Activated T-helper 2 cell treated with anti-CD3 and anti-CD28 coated beads, Interferon-gamma antibody, Interleukin-2, Interleukin-4, amounts not matched to agents 10 μg/mL and 5 μg/mL and 100 μg/mL, durations not matched to agents 14 hours and 24 hours and 36 hours (primary cell): ENCODE measurements at regions of chr5 and their contacts with region 1.

Region 1: DNA sequence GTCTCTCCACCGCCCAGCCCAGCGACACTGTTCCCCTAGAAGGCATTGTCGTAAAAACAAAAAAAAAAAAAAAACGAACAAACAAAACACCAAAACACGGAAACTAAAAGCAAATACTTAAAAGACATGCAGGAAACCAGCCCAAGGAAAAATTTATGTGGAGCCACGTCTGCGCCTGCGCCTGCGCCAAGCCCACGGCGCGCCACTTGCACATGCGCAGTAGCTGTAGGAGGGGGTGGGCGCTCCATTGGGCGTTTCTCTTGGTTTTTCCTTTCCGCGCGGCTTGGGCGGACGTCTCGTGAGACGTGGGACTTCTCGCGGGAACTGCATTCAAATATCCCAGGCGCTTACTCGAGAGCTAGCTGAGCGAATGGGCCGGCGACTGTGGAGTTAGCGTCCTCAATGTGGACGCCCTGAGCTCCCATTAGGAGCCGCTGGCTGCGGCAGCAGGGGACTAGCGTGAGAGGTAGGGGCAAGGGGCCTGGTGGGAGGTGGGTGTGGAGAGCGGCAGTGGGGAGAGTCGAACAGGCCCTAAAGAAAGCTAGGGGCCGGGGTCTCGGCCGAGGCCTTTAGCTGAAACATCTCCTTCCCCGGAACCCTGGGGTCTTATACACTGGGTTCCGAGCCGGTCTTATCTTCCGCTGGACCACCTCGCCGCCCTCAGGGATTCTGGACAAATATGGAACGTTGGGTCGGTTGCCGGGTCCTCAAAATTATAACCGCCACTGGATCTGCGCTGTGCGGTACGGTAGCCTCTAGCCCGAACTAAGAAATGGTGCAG is at the start of gene SPDL1:
- DNase-seq: peak; percentile 93
- H3K4me3 Mint-ChIP-seq: peak within 1 kb of the TSS; percentile 98
- H3K27ac Mint-ChIP-seq: peak within 1 kb of the TSS; percentile 94
- H3K4me1 Mint-ChIP-seq: peaks cover 42% of the 10 kb centered on the region
- H3K27me3 Mint-ChIP-seq: peaks cover 12% of the 10 kb centered on the region
- total RNA-seq, gene SPDL1: 35.1 and 35.2 TPM in 2 replicates

Region 2: GRCh38 chr5:168679515-168679920 is 904.1 kb before region 1 on chr5:
- intact Hi-C with region 1: loop called (anchors 1 kb)
- DNase-seq: peak; percentile 42
- H3K4me3 Mint-ChIP-seq: no peak overlapping the region
- H3K27ac Mint-ChIP-seq: no peak overlapping the region
- H3K4me1 Mint-ChIP-seq: peaks cover 21% of the 10 kb centered on the region
- H3K27me3 Mint-ChIP-seq: no peaks in the 10 kb centered on the region

Region 3: GRCh38 chr5:168793841-168794837 is 789.5 kb before region 1 on chr5:
- intact Hi-C with region 1: loop called (anchors 5 kb)
- DNase-seq: no peak
- H3K4me3 Mint-ChIP-seq: no peak overlapping the region
- H3K27ac Mint-ChIP-seq: peak overlapping the region; percentile 95
- H3K4me1 Mint-ChIP-seq: peaks cover 56% of the 10 kb centered on the region
- H3K27me3 Mint-ChIP-seq: no peaks in the 10 kb centered on the region

Region 4: GRCh38 chr5:168947212-168947868 is 636.3 kb before region 1 on chr5:
- intact Hi-C with region 1: loop called (anchors 5 kb)
- DNase-seq: peak; percentile 12
- H3K4me3 Mint-ChIP-seq: no peak overlapping the region
- H3K27ac Mint-ChIP-seq: no peak overlapping the region
- H3K4me1 Mint-ChIP-seq: peaks cover 17% of the 10 kb centered on the region
- H3K27me3 Mint-ChIP-seq: no peaks in the 10 kb centered on the region

Region 5: DNA sequence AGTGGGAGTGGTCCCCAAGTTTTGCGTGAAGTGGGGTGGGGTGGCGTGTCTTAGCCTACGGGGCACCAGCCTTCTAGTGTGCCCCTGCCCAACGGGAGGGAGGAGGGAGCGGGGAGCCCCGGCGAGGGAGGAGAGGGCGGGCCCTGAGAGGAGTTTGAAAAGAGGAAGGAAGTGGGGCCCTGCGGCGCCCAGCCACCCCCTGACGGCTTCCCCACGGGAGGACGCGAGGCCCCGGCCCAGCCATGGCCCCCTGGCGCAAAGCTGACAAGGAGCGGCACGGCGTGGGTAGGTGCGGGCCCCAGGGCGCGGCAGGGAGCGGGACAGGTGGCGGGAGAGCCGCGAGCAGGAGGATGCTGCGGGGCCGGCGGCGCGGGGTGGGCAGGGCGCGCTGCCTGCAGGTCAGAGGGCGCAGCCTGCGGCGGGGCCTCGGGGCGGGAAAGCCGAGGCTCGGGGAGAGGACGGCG is 53.5 kb after region 1 on chr5 and contains the start of gene DOCK2:
- intact Hi-C with region 1: loop called (anchors 1 kb)
- DNase-seq: peak; percentile 69
- H3K4me3 Mint-ChIP-seq: peak within 1 kb of the TSS; percentile 89
- H3K27ac Mint-ChIP-seq: peak within 1 kb of the TSS; percentile 91
- H3K4me1 Mint-ChIP-seq: peaks cover 40% of the 10 kb centered on the region
- H3K27me3 Mint-ChIP-seq: peaks cover 2% of the 10 kb centered on the region
- total RNA-seq, gene DOCK2: 217 and 246 TPM in 2 replicates

Region 6: DNA sequence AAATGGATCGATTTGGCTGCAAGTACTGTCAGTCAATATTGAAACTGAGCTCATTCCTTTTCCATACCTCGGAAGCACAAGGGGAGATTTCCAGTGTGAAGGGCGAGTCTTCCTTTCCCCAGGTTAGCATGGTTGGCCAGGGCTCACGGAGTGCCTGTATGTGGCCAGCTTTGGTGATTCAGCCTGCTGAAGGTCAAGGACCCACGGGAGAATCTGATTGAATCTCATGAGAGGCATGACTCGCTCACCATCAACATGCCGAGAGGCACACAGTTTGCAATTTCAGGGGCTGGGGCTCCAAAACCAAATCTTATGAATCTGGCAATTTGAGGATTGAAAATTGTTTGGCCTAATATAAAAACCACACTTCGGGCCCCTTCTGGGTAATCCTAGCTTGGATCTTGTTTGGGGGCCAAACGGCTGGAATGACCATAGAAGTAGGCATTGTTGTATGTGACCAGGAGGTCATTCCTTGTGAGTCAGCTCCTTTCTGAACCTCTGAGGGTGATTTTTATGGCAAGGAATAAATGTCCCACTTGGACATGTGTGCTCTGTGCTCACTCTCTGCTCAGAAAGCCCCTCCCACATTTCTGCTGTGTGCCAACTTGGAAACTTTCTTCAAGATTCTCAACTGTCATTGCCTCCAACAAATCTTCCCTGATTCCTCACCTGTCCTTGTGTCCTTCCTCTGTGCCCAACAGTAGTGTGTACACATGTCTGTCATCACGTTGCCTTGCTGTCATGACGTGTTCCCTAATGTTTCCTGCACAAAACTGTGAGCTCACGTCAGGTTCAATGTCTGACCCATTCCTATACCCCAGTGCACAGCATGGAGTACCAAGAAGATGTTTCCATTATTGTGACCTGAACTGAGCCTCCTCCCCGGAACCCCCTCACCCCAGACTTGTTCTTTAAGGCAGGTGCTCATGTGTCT is 123.4 kb after region 1 on chr5:
- intact Hi-C with region 1: loop called (anchors 2 kb)
- DNase-seq: no peak
- H3K4me3 Mint-ChIP-seq: no peak overlapping the region
- H3K27ac Mint-ChIP-seq: peak overlapping the region; percentile 92
- H3K4me1 Mint-ChIP-seq: peaks cover 40% of the 10 kb centered on the region
- H3K27me3 Mint-ChIP-seq: no peaks in the 10 kb centered on the region

Region 7: GRCh38 chr5:169736653-169737052 is 153.0 kb after region 1 on chr5:
- intact Hi-C with region 1: no loop called
- DNase-seq: no peak
- H3K4me3 Mint-ChIP-seq: no peak overlapping the region
- H3K27ac Mint-ChIP-seq: no peak overlapping the region
- H3K4me1 Mint-ChIP-seq: peaks cover 21% of the 10 kb centered on the region
- H3K27me3 Mint-ChIP-seq: no peaks in the 10 kb centered on the region

Region 8: DNA sequence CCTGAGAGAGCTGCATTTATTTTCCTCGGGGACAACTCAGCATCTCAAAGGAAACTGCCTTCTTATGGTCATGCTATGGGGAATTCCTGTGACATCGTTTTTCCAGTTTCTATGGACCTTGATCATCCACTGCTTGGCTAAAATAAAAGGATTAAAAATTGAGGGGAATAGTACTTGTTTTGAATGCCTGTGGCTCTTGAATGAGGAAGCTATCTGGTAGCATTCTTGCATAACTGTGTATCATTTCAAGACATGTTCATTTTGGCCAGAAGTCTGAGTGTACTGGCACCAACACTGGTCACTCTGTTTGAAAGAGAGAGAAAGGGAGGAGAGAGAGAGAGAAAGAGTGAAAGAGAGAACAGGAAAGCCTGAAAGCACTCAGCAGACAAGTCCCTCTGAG is 170.2 kb after region 1 on chr5:
- intact Hi-C with region 1: no loop called
- DNase-seq: no peak
- H3K4me3 Mint-ChIP-seq: no peak overlapping the region
- H3K27ac Mint-ChIP-seq: no peak overlapping the region
- H3K4me1 Mint-ChIP-seq: peaks cover 23% of the 10 kb centered on the region
- H3K27me3 Mint-ChIP-seq: no peaks in the 10 kb centered on the region